GM12878 (cell line): ENCODE measurements at regions of chr3 and their contacts with region 1.

Region 1: DNA sequence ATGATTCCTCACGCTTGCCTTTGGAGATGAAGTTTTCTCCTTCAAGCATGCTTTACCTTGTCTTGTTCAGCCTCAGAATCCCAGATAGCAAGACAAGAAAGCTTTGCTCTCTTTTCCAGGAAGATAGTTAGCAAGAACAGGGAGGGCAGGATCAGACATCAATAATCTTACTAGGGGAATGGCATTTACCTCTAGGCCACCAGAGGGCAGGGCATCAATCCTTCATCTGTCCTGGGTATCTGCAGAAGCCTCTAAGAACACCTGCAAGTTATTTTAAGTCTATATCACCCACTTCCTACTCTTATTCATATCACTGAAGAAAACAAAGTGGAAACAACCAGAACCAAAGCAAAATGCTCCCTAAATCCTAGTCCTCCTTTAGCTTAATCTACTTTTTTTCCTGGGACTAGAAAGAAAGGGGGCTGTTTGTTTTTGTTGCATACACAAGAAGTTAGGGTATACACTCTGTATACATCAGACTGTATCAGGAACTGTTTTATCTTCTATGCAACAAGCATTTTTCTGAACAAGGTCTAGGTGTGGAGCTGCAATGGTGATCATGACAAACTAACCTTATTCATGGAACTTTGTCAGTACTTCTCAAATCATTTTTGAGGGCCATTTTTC is 862.5 kb downstream of the CADM2 start:
- DNase-seq: no peak
- ATAC-seq: peak; percentile 86
- H3K4me3 ChIP-seq: no peak overlapping the region
- H3K27ac ChIP-seq: no peak overlapping the region
- H3K4me1 ChIP-seq: no peaks in the 10 kb centered on the region
- H3K27me3 ChIP-seq: no peaks in the 10 kb centered on the region
- CTCF ChIP-seq: peak; percentile 46 to 64 (median 51)
- EP300 ChIP-seq: no peak
- POLR2A ChIP-seq: no peak
- RAD21 ChIP-seq: peak; percentile 35; the same call in 1 of the 2 replicates

Region 2: GRCh38 chr3:85862893-85863455 is 41.7 kb after region 1 on chr3:
- CTCF ChIA-PET with region 1: no interaction called
- POLR2A ChIA-PET with region 1: no interaction called
- RAD21 ChIA-PET with region 1: no interaction called
- SMC1A ChIA-PET with region 1: no interaction called
- in situ Hi-C with region 1: no loop called
- intact Hi-C with region 1: no loop called
- DNase-seq: no peak
- ATAC-seq: no peak
- H3K4me3 ChIP-seq: no peak overlapping the region
- H3K27ac ChIP-seq: no peak overlapping the region
- H3K4me1 ChIP-seq: no peaks in the 10 kb centered on the region
- H3K27me3 ChIP-seq: no peaks in the 10 kb centered on the region
- CTCF ChIP-seq: no peak
- EP300 ChIP-seq: no peak
- POLR2A ChIP-seq: no peak
- RAD21 ChIP-seq: no peak

Region 3: DNA sequence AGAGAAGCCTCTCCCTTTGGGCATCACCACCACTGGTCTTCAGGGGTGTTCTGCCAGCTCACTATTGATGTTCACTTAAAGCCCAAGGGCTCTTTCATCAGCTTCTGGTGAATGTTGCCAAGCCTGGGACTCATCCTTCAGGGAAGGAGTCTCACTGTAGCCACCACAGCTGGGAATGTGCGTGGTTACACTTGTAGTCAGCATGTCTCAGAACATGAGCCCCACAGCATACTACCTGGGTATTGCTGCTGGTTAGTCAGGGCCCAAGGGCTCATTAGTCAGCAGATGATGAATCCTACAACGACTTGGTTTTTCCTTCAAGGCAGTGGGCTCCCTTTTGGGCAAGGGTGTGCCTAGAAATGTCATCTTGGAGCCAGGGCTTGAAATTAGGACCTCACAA is 756.8 kb after region 1 on chr3:
- CTCF ChIA-PET with region 1: no interaction called
- POLR2A ChIA-PET with region 1: no interaction called
- RAD21 ChIA-PET with region 1: no interaction called
- SMC1A ChIA-PET with region 1: no interaction called
- in situ Hi-C with region 1: loop called (anchors 10 kb)
- intact Hi-C with region 1: no loop called
- DNase-seq: no peak
- ATAC-seq: no peak
- H3K4me3 ChIP-seq: no peak overlapping the region
- H3K27ac ChIP-seq: no peak overlapping the region
- H3K4me1 ChIP-seq: no peaks in the 10 kb centered on the region
- H3K27me3 ChIP-seq: no peaks in the 10 kb centered on the region; a peak in 1 of 4 replicates
- CTCF ChIP-seq: no peak
- EP300 ChIP-seq: no peak
- POLR2A ChIP-seq: no peak
- RAD21 ChIP-seq: no peak